ENCODE measurements at regions of chr12 and their contacts with region 1.

Region 1: DNA sequence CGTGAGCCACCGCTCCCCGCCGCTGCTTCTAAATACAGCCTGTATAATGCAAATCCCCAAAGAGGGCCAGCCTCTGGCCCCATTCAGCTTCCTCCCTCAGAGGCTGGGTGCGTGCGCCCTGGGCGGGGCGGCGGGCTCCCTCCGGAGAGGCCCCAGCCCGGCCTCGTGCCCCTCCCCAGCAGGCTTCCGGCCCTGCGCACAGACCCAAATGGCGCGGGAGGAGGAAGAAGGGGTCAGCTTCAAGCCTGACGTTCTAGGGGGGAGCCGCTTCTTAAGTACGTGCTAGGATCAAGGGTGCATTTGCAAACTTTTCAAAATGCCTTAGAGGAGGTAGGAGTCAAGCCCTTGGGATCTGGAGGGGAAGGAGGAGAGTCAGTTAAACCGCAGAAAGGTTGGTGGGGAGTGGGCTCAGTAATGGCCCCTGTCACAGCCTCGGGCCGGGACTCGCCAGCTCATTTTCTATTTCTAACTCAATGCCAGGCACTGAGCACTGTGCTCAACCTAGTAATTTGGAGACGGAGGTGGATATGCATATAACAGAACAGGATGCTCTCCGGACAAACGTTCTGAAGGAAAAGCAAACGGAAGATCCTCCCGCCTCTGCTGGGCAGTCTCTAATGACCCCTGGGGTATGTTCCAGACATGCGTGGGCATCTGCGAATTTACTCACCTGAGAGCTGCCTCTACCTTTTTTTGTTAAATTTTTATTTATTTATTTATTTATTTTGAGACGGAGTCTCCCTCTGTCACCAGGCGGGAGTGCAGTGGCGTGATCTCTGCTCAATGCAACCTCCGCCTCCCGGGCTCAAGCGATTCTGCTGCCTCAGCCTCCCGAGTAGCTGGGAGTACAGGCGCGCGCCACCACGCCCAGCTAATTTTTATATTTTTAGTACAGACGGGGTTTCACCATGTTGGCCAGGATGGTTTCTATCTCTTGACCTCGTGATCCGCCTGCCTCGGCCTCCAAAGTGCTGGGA is 32.3 kb downstream of the NINJ2 start:
- DNase-seq: peak; percentile 96
- H3K4me3 Mint-ChIP-seq: peak overlapping the region; percentile 93
- H3K27ac Mint-ChIP-seq: peak overlapping the region; percentile 99
- H3K4me1 Mint-ChIP-seq: peaks cover 42% of the 10 kb centered on the region
- H3K27me3 Mint-ChIP-seq: no peaks in the 10 kb centered on the region

Region 2: DNA sequence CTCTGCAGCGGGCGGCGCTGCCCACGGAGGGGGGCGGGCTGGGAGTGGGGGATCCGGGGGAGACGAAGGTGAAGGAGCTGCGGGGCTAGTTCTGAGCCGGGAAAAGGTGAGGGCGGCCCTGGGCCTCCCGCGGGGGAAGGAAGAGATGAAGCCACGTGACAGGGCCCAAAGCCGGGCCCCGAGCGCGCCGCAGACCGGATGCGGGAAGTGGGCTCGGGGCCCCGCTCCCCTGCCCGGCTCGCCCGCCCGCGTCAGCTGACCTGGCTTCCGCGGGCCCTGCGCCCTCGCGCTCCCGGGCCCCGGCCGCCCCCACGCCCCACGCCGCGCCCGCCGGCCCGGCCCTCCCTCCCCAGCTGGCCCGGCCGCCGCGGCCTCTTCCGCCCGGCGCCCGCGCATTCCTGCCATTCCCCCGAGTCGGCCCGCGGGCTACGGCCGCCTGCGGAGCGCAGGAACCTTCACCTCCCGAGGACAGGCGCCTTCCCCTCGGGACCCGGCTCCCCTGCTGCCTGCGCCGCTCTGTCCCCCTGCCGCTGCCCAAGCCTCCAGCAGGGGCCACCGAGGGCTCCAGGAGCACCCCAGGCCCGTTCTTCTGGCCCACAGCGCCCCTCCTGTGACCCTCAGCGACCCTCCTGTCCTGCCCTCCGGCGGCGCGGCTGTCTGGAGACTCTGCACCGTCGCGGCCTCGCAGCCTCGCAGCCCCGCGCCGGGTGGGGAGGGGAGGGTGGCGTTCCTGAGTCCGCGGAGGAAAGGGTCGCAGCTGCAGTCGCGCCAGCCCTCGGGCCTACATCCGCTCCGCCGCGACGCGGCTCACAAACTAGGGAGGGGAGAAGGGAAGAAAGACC is 11.9 kb after region 1 on chr12:
- intact Hi-C with region 1: loop called (anchors 1 kb)
- DNase-seq: peak; percentile 94
- H3K4me3 Mint-ChIP-seq: peak overlapping the region; percentile 86
- H3K27ac Mint-ChIP-seq: peak overlapping the region; percentile 92
- H3K4me1 Mint-ChIP-seq: peaks cover 57% of the 10 kb centered on the region
- H3K27me3 Mint-ChIP-seq: no peaks in the 10 kb centered on the region